ENCODE measurements at regions of chr7 and their contacts with region 1.

Region 1: DNA sequence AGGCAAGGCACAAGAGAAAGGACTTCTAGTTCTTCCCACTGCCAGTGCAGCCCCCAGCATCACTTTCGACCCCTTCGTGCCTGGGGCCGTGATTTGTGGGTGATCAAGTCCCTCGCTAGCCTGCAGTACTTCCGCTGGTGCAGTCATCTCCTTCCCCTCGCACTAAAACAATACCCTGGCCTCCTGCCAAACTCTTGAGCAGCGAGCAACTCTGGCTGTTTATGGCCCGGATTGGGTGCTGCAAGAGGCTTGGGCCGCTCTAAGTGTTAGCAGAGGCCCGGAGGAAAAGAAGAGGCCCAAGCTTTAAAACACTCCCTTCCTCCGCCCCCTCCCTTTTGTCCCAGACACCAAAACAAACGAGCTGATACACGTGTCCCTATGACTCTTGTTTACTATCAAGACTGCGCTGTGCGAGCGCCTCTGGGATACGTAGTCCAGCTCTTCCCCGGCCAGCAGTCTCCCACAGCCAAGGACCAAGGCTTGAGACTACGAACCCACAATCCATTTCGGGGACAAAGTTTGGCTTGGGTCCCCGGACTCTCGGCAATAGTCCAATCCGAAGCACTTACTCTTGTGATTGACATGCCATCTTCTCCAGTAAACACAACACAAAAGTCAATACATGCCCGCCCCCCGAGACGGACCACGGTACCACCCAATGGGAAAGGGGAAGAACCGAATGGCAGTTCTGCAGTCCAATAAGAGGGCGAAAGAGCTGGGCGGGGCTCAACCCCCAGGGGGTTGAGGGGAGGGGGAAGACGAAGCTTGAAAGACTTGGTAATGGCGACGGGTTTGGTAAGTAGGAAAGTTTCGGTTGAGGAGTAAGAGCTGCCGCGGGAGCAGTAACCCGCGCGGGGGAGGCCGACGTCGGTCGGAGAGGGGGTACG is at the start of gene HBP1:
- DNase-seq: peak; percentile 94 to 99 (median 99)
- H3K4me3 ChIP-seq: peak within 1 kb of the TSS; percentile 84
- H3K4me3 Mint-ChIP-seq: peak within 1 kb of the TSS; percentile 94 to 100 (median 97)
- H3K27ac ChIP-seq: peak within 1 kb of the TSS; percentile 94
- H3K27ac Mint-ChIP-seq: peak within 1 kb of the TSS; percentile 96 to 100 (median 100)
- H3K4me1 ChIP-seq: peaks cover 32% of the 10 kb centered on the region
- H3K4me1 Mint-ChIP-seq: peaks cover 43 to 59% (median 48%) of the 10 kb centered on the region in 3 donors
- H3K27me3 ChIP-seq: no peaks in the 10 kb centered on the region
- H3K27me3 Mint-ChIP-seq: peaks cover 13 to 14% of the 10 kb centered on the region in 2 donors
- total RNA-seq, gene HBP1: 17.2 to 17.6 TPM

Region 2: DNA sequence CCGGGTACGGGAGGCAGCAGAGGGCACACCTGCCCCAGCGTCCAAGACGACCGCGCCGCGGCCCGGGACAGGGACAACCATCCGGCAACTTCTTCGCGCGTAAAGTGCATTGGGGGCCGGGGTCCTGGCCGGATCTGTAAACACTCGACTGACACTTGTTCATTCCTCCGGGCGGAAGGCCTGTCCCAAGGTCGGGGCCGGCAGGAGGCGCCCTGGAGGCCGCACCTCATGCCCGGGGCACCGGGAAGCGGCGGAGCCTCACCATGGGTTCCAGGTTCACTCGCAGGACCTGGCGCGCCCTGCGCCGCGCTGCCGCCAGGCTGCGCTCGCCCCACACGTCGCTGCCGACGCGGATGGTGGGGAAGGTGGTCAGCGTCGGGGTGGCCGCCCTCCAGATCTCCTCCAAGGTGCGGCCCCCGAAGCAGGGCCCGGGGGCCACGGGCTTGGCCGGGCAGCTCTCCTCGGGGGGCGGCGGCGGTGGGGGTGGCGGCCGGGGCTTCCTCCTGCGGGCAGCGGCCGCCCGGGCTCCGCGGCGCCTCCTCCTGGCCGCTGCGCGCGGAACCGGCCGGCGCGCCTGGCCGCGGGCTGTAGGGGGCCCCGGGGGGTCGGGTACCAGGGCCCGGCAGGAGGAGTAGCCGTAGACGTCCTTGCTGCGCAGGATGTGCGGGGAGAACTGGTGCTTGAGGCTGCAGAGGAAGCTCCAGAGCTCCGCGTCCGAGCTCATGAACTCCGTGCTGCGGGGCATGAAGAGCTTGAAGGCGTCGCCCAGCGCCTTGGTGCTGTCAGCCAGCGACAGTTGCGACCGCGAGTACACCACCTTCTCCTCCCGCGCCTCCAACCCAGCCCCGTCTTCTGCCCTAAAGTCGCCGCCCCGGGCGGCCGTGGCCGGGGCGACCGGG is 508.3 kb before region 1 on chr7:
- CTCF ChIA-PET with region 1: interaction called, 8 read pairs
- POLR2A ChIA-PET with region 1: interaction called, 11 read pairs
- DNase-seq: peak; percentile 50 to 84 (median 70)
- H3K4me3 ChIP-seq: peak overlapping the region; percentile 56
- H3K4me3 Mint-ChIP-seq: peak overlapping the region; percentile 84 to 96 (median 90)
- H3K27ac ChIP-seq: peak overlapping the region; percentile 79
- H3K27ac Mint-ChIP-seq: peak overlapping the region; percentile 71 to 98 (median 89)
- H3K4me1 ChIP-seq: peaks cover 24% of the 10 kb centered on the region
- H3K4me1 Mint-ChIP-seq: peaks cover 24 to 47% (median 39%) of the 10 kb centered on the region in 3 donors
- H3K27me3 ChIP-seq: no peaks in the 10 kb centered on the region
- H3K27me3 Mint-ChIP-seq: no peaks in the 10 kb centered on the region

Region 3: DNA sequence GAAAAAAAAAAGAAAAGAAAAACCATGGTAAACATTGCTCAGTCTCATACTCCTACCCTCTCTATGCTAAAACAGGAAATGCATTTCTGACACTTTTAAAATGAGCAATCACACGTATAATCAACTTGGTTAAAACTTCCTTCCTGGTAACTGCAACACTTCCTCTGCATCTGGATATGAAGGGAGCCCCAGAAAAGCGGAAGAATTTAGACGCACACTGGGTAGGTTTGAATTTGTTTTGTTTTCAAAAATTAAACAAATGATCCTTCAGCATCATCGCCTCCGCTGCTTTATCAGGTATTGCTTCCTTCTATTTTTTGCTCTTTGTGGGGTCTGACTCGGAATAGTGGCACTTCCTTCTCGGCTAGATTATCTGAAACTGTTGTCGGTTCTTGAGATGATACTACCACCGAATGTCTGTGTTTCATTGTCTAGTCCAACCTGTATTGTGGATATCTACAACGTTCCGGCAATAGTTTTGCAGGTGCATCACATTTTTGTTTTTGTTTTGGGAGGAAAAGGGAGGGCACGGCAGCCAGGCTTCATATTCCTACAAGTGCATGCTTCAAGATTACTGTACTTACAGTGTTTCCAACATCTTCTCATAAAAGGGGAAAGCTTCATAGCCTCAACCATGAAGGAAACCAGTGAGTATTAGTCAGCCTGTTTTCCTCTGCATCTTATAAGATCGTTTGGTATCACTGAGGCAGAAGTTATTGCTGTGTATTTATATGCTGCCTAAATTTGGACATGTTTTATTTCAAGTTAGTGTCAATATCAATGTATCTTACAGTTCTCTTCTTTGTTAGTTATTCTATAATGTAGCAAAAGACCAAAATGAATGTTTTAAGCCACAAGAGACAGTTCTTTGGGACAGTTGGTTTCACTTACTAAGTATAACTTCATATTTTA is 303.1 kb before region 1 on chr7 and contains the start of gene PIK3CG:
- CTCF ChIA-PET with region 1: interaction called, 4 read pairs
- POLR2A ChIA-PET with region 1: interaction called, 16 read pairs
- DNase-seq: peak in 2 of 5 donors; percentile 69 to 70
- H3K4me3 ChIP-seq: peak within 1 kb of the TSS; percentile 74
- H3K4me3 Mint-ChIP-seq: peak within 1 kb of the TSS; percentile 92 to 99 (median 96)
- H3K27ac ChIP-seq: peak within 1 kb of the TSS; percentile 74
- H3K27ac Mint-ChIP-seq: peak within 1 kb of the TSS; percentile 78 to 98 (median 94)
- H3K4me1 ChIP-seq: peaks cover 65% of the 10 kb centered on the region
- H3K4me1 Mint-ChIP-seq: peaks cover 72 to 84% (median 80%) of the 10 kb centered on the region in 3 donors
- H3K27me3 ChIP-seq: no peaks in the 10 kb centered on the region
- H3K27me3 Mint-ChIP-seq: no peaks in the 10 kb centered on the region
- total RNA-seq, gene PIK3CG: 25.3 to 26.3 TPM

Region 4: DNA sequence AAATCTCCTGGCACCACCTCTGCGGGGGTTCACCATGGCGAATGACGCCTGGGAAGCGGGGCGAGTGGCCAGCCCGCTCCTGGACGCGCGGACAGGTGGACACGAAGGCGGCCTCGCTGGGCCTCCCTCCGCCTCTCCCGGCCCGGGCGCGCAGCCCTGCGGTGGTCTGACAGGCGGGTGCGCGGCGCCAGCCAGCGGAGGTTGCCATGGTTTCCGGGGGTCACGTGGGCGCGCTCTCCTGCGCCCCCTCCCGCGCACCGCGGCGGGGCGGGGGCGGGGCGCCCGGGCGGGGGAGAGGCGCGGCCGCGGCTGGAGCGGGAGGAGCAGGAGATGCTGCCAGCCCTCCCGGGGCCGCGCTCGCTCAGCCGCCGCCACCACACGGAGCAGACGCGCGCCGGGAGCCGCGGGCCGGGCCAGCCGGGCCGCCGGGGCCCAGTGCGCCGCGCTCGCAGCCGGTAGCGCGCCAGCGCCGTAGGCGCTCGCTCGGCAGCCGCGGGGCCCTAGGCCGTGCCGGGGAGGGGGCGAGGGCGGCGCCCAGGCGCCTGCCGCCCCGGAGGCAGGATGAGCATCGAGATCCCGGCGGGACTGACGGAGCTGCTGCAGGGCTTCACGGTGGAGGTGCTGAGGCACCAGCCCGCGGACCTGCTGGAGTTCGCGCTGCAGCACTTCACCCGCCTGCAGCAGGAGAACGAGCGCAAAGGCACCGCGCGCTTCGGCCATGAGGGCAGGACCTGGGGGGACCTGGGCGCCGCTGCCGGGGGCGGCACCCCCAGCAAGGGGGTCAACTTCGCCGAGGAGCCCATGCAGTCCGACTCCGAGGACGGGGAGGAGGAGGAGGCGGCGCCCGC is 123.9 kb before region 1 on chr7 and contains the start of gene PRKAR2B:
- CTCF ChIA-PET with region 1: no interaction called
- POLR2A ChIA-PET with region 1: no interaction called
- DNase-seq: peak; percentile 62 to 85 (median 80)
- H3K4me3 ChIP-seq: peak within 1 kb of the TSS; percentile 70
- H3K4me3 Mint-ChIP-seq: peak within 1 kb of the TSS; percentile 81 to 97 (median 87)
- H3K27ac ChIP-seq: peak within 1 kb of the TSS; percentile 71
- H3K27ac Mint-ChIP-seq: peak within 1 kb of the TSS in 7 of 8 donors; percentile 4 to 92 (median 62)
- H3K4me1 ChIP-seq: peaks cover 11% of the 10 kb centered on the region
- H3K4me1 Mint-ChIP-seq: peaks cover 8 to 15% (median 11%) of the 10 kb centered on the region in 3 donors
- H3K27me3 ChIP-seq: peaks cover 9% of the 10 kb centered on the region
- H3K27me3 Mint-ChIP-seq: peaks cover 17 to 36% of the 10 kb centered on the region in 2 donors
- total RNA-seq, gene PRKAR2B: 1.1 to 1.2 TPM

Region 5: DNA sequence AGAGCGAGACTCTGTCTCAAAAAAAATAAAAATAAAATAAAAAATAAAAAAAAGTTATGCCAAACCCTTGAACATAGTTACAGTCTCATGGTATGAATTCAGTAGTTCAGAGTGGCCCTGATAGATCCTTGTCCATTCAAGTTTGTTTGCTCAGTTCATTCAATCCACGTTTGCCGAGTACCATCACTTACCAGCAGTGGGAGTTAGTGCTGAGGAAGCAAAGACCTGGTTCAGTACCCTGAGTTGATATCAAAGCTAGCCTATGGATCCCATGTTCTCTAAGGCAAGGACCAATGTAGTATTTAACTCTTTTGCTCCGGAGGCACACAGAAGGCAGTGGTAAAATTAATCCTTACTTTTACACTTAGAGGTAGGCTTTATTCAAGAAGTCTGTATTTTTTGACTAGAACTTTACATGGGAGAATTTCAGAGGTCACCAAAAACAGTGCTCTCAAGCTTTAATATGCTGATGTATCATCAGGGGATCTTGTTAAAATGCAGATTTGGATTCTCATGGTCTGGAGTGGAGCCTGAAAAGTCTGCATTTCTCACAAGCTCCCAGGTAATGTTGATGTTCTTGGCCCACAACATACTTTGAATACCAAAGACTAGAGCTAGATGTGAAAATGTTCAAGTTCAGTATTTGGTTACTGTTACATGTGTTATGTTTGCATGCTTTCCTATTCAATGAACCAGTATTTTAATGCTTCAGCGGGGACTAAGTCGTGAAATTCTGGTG is 37.8 kb before region 1 on chr7:
- CTCF ChIA-PET with region 1: interaction called, 4 read pairs
- POLR2A ChIA-PET with region 1: interaction called, 28 read pairs
- DNase-seq: no peak
- H3K4me3 ChIP-seq: no peak overlapping the region
- H3K4me3 Mint-ChIP-seq: no peak overlapping the region
- H3K27ac ChIP-seq: no peak overlapping the region
- H3K27ac Mint-ChIP-seq: no peak overlapping the region
- H3K4me1 ChIP-seq: peaks cover 12% of the 10 kb centered on the region
- H3K4me1 Mint-ChIP-seq: peaks cover 12 to 14% (median 14%) of the 10 kb centered on the region in 3 donors
- H3K27me3 ChIP-seq: no peaks in the 10 kb centered on the region
- H3K27me3 Mint-ChIP-seq: no peaks in the 10 kb centered on the region

Region 6: GRCh38 chr7:107150375-107151073 is 18.0 kb before region 1 on chr7:
- CTCF ChIA-PET with region 1: interaction called, 26 read pairs
- POLR2A ChIA-PET with region 1: interaction called, 21 read pairs
- DNase-seq: peak; percentile 59 to 76 (median 68)
- H3K4me3 ChIP-seq: no peak overlapping the region
- H3K4me3 Mint-ChIP-seq: no peak overlapping the region
- H3K27ac ChIP-seq: no peak overlapping the region
- H3K27ac Mint-ChIP-seq: peak overlapping the region in 1 of 8 donors; percentile 22
- H3K4me1 ChIP-seq: no peaks in the 10 kb centered on the region
- H3K4me1 Mint-ChIP-seq: peaks cover 0 to 11% (median 4%) of the 10 kb centered on the region in 3 donors
- H3K27me3 ChIP-seq: no peaks in the 10 kb centered on the region
- H3K27me3 Mint-ChIP-seq: peaks cover 0 to 6% of the 10 kb centered on the region in 2 donors

Region 7: GRCh38 chr7:107180378-107180777 is 11.9 kb after region 1 on chr7:
- CTCF ChIA-PET with region 1: interaction called, 6 read pairs
- POLR2A ChIA-PET with region 1: interaction called, 40 read pairs
- DNase-seq: peak in 4 of 5 donors; percentile 20 to 81 (median 30)
- H3K4me3 ChIP-seq: no peak overlapping the region
- H3K4me3 Mint-ChIP-seq: peak overlapping the region in 4 of 7 donors; percentile 3 to 37 (median 18)
- H3K27ac ChIP-seq: no peak overlapping the region
- H3K27ac Mint-ChIP-seq: peak overlapping the region in 7 of 8 donors; percentile 6 to 95 (median 44)
- H3K4me1 ChIP-seq: peaks cover 35% of the 10 kb centered on the region
- H3K4me1 Mint-ChIP-seq: peaks cover 61 to 78% (median 67%) of the 10 kb centered on the region in 3 donors
- H3K27me3 ChIP-seq: no peaks in the 10 kb centered on the region
- H3K27me3 Mint-ChIP-seq: no peaks in the 10 kb centered on the region

Region 8: DNA sequence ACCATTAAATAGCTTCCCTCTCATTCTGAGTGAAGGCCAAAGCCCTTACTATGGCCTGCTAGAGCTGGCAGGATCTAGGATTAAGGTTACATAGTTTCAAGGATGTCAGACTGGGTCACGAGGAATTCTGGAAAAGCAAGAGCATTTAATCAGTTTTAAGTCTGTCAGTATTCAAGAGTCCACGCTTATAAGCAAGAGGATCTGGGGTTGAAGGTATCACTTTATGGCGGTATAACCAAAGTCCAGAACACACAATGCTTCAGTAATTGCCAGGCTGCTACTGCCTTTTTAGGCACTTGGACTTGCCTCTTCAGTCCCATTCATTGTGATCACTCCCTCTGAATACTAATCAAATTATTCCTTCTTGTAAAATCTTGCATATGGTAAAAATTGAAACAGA is 101.3 kb after region 1 on chr7:
- CTCF ChIA-PET with region 1: no interaction called
- POLR2A ChIA-PET with region 1: no interaction called
- DNase-seq: no peak
- H3K4me3 ChIP-seq: no peak overlapping the region
- H3K4me3 Mint-ChIP-seq: no peak overlapping the region
- H3K27ac ChIP-seq: no peak overlapping the region
- H3K27ac Mint-ChIP-seq: no peak overlapping the region
- H3K4me1 ChIP-seq: no peaks in the 10 kb centered on the region
- H3K4me1 Mint-ChIP-seq: no peaks in the 10 kb centered on the region
- H3K27me3 ChIP-seq: no peaks in the 10 kb centered on the region
- H3K27me3 Mint-ChIP-seq: no peaks in the 10 kb centered on the region

Region 9: GRCh38 chr7:107743567-107744344 is 575.3 kb after region 1 on chr7 and contains the start of gene CBLL1:
- CTCF ChIA-PET with region 1: interaction called, 5 read pairs
- POLR2A ChIA-PET with region 1: interaction called, 38 read pairs
- DNase-seq: peak; percentile 96 to 98 (median 97)
- H3K4me3 ChIP-seq: peak within 1 kb of the TSS; percentile 97
- H3K4me3 Mint-ChIP-seq: peak within 1 kb of the TSS; percentile 93 to 99 (median 97)
- H3K27ac ChIP-seq: peak within 1 kb of the TSS; percentile 98
- H3K27ac Mint-ChIP-seq: peak within 1 kb of the TSS; percentile 94 to 100 (median 100)
- H3K4me1 ChIP-seq: peaks cover 47% of the 10 kb centered on the region
- H3K4me1 Mint-ChIP-seq: peaks cover 50 to 59% (median 55%) of the 10 kb centered on the region in 3 donors
- H3K27me3 ChIP-seq: no peaks in the 10 kb centered on the region
- H3K27me3 Mint-ChIP-seq: no peaks in the 10 kb centered on the region
- total RNA-seq, gene CBLL1: 42.7 to 49.3 TPM